Tibial artery (tissue), 4 donors: ENCODE measurements at regions of chr17 and their contacts with region 1.

Region 1: DNA sequence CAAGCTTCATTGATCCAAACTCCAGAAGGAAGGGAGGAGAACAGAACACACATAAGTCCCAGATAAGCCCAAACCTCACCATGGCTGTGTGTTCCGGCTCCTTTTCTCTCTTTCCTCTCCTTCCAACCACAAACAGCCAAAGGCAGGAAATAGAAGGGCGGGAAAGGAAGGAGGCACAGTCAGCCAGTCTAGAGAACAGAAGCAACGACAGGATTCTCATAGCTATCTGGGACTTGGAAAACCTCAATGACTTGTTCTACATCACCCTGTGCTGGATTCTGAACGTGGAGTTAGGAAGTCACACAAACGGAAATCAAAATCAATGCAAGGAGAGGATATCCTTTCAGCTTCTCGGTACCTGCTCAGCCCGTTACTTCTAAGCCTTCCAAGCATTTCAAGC is 9.0 kb downstream of the CRK start:
- DNase-seq: no peak
- H3K4me3 ChIP-seq: no peak overlapping the region
- H3K27ac ChIP-seq: no peak overlapping the region
- H3K4me1 ChIP-seq: peaks cover 0 to 68% (median 25%) of the 10 kb centered on the region in 4 donors
- H3K27me3 ChIP-seq: no peaks in the 10 kb centered on the region
- CTCF ChIP-seq: no peak

Region 2: DNA sequence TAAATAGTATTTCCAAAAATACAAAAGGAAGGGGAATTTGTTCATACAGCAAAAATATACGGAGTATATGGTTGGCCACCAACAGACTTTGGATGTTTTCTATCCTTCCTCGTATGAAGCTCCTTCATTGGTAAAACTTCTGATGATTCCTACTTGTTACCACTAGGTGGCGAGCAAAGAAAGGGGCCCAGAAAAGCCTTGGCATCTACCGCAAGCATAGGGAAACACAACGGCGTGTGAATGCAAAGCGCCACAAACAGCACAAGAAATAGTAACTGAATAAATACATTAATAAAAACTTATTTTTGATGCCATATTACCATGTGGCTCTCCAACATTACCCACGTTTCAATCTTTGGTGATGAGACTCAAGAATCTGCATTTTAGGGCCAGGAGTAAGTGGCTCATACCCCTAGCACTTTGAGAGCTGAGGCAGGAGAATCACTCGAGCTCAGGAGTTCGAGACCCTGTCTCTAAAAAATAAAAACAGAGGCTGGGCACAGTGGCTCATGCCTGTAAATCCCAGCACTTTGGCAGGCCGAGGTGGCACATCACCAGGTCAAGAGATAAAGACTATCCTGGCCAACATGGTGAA is 81.5 kb before region 1 on chr17:
- intact Hi-C with region 1: loop called (anchors 10 kb)
- DNase-seq: peak; percentile 33 to 76
- H3K4me3 ChIP-seq: no peak overlapping the region
- H3K27ac ChIP-seq: peak overlapping the region; percentile 33 to 61
- H3K4me1 ChIP-seq: peaks cover 0 to 96% (median 53%) of the 10 kb centered on the region in 4 donors
- H3K27me3 ChIP-seq: no peaks in the 10 kb centered on the region
- CTCF ChIP-seq: peak; percentile 72 to 85

Region 3: DNA sequence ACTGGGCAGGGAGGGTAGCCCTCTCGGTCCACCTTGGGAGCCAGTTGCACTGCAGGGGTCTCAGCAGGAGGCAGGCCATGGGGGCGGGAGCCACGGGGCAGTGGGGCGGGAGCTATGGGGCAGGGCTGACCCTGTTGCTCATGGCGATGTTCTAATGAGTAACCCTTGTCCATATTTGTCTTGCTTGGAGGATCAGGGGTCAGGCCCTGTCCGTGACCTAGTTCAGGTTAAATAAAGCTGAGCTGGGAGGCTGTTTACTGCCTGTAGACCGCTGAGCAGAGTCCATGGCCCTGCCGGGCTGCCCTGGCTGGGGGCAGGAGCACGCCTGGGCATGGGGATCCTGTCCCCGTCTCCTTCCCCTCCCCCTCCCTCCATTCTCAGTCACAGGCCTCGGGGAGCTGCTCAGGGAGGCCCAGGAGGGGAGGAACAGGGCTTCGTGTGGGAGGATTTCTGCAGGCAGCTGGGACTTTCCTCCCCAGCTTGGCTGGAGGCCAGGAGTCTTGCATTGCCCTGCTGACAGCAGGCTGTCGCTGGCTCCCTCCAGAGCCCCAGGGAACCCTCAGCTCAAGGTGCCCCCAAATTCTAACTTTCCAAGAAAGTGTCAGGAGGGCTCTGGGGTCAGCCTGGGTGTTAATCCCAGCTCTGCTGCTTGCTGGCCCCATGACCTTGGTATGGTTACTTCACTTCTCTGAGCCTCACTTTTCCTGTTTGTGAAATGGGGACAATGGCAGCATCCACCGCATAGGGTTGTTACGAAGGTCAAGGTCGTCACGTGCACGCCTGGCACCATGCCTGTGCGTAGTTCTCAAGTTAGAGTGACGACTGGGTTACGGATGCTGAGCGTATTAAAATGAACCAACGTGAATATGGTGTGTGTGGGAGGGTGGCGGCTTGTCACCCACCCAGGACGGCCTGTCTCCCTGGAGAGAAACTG is 289.6 kb after region 1 on chr17:
- intact Hi-C with region 1: no loop called
- DNase-seq: peak in 1 of 2 donors; percentile 66
- H3K4me3 ChIP-seq: no peak overlapping the region
- H3K27ac ChIP-seq: no peak overlapping the region
- H3K4me1 ChIP-seq: peaks cover 0 to 8% (median 4%) of the 10 kb centered on the region in 4 donors
- H3K27me3 ChIP-seq: no peaks in the 10 kb centered on the region
- CTCF ChIP-seq: no peak